ENCODE measurements at regions of chr3 and their contacts with region 1.

Region 1: DNA sequence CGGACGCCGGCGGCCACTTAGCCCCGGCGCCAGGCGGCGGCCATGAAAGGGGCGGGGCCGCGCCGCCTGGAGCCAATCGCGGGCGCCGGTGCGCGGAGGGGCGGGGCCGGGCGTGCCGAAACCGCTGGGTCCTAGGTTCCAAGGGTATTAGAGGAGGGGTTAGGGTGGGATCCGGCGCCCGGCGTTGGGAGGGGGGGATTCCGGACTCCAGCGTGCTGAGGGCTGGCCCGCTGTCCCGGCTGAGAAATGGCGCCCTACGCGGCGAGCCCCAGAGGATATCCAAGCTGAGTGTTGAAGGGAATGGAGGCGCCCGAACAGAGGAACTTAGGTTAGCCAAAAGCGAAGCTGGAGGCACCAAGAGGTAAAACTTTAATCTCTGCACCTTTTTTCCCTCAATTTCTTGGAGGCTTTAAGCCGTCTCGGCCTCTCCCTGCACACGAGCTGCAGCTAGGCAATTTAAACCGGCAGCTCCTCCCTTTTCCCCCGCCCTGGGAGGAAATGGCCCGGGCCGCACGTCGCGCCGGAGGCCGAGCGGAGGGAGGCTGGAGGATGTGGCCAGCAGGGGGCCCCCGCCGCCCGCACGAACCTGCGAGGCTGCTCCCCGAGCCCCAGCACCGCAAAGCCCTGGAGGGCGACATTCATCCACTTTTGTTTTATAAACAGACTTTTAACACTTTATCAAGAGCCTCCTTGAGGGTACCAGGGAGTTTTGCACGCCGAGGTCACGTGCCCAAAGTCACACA is at the start of gene XXYLT1:
- DNase-seq: no peak
- H3K4me3 ChIP-seq: peak within 1 kb of the TSS; percentile 81
- H3K27ac ChIP-seq: peak within 1 kb of the TSS; percentile 39
- H3K27me3 ChIP-seq: no peaks in the 10 kb centered on the region
- CTCF ChIP-seq: peak; percentile 86
- polyA plus RNA-seq, gene XXYLT1: 16.5 and 17.3 TPM in 2 replicates

Region 2: DNA sequence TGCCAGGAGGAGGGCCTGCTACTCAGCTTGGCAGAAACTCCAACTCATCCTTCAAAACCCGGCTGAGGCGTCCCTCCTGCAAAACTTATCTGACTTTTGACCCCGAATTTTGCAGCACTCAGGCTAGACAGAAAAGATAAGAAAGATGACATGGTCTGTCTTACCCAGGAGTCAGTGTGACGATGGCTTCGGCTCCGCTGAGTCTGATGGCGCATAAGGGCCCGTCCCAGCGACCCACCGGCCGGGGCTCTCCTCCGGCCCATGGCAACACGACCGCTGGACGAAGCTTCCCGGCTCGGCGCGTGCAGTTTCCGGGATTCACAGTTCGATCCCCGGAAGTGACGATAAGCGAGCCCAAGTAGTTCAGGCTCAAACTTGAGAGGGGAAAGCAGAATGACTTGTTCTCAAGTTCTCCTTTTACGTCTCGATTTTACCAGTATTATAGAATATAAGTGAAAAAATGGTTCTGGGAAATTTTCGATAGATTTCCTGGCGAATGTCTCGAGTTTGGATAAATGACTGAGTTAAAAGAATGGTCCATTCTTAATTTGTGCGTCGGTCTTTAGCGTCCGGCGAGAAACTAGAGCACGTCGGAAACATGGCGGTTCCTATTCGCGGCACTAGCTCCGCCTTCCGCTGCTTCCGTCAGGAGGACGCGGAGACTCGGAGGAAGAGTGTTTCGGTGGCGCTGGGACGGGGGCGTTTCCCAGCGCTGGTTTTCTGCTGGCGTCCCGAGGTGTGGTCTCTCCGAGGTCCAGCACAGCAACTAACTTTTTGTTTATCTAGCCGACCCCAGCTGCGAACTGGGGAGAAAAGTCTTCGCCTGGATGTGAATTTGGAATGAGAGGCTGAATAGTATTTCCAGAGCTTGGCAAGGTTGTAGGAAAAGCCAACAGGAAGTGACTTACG is 599.1 kb before region 1 on chr3 and contains the start of gene LSG1:
- CTCF ChIA-PET with region 1: interaction called, 37 read pairs
- POLR2A ChIA-PET with region 1: interaction called, 4 read pairs
- DNase-seq: peak; percentile 87
- H3K4me3 ChIP-seq: peak within 1 kb of the TSS; percentile 95
- H3K27ac ChIP-seq: peak within 1 kb of the TSS; percentile 84
- H3K27me3 ChIP-seq: peaks cover 3% of the 10 kb centered on the region
- CTCF ChIP-seq: no peak
- polyA plus RNA-seq, gene LSG1: 30.2 and 34.0 TPM in 2 replicates

Region 3: GRCh38 chr3:195297446-195297845 is 26.2 kb after region 1 on chr3:
- CTCF ChIA-PET with region 1: interaction called, 18 read pairs
- POLR2A ChIA-PET with region 1: no interaction called
- DNase-seq: no peak
- H3K4me3 ChIP-seq: no peak overlapping the region
- H3K27ac ChIP-seq: no peak overlapping the region
- H3K27me3 ChIP-seq: no peaks in the 10 kb centered on the region
- CTCF ChIP-seq: no peak

Region 4: DNA sequence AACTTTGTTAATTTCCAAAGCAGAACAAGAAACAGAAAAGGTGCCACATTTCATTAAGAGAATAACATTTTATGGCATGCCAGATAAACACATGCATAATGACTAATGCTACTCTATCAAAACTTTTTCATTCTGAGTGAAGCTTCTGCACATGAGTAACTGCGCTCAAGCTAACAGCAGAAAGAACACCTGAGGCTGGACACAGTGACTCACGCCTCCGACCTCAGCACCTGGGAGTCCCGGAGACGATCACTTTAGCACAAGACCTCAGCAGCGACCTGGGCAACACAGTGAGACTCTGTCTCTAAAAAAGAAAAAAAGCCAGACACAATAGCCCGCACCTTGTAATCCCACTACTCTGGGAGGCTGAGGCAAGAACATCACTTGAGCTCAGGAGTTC is 100.9 kb after region 1 on chr3:
- CTCF ChIA-PET with region 1: no interaction called
- POLR2A ChIA-PET with region 1: no interaction called
- DNase-seq: no peak
- H3K4me3 ChIP-seq: no peak overlapping the region
- H3K27ac ChIP-seq: no peak overlapping the region
- H3K27me3 ChIP-seq: no peaks in the 10 kb centered on the region
- CTCF ChIP-seq: no peak

Region 5: DNA sequence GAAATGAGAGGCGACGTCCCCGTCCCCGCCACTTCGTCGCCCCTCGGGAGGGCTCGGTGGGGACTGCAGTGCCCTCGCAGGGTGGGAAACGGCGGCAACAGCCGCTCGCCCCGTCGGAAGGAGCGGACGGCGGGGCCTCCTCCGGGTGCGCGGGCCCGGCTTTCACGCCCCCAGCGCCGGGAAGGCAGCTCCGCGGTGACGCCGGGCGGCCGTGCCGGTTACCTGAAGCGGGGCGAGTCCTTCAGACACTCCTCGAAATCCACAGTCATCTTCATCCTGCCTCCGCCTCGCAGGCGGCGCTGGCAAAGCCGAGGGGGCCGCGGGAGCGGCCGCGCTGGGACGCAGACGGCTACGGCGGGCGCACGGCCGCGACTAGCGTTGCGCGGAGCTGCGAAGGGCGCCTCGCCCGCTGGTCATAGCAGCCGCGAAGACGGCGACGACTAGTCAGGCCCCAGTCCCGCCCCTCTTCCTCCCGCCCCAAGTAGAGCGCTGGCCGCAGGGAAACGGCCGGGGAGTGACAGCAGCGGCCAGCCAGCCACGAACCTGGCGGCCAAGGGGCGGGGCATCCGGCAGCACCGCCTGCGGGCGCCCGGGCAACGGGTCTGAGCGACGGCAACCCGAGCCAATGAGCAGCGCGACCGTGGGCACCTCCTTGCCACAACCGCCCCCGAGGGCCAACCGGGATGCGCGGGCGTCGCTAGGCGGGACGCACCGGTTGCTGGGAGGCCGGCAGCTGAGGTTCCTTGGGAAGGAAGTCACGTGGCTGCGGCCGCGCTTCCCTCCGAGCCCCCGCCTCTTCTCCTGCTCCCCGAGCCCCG is 171.5 kb after region 1 on chr3 and contains the start of gene ACAP2:
- CTCF ChIA-PET with region 1: interaction called, 16 read pairs
- POLR2A ChIA-PET with region 1: interaction called, 9 read pairs
- DNase-seq: peak; percentile 99
- H3K4me3 ChIP-seq: peak within 1 kb of the TSS; percentile 60
- H3K27ac ChIP-seq: peak within 1 kb of the TSS; percentile 25
- H3K27me3 ChIP-seq: no peaks in the 10 kb centered on the region
- CTCF ChIP-seq: no peak
- polyA plus RNA-seq, gene ACAP2: 35.9 and 50.2 TPM in 2 replicates

Region 6: GRCh38 chr3:195517030-195517429 is 245.7 kb after region 1 on chr3:
- CTCF ChIA-PET with region 1: interaction called, 303 read pairs
- POLR2A ChIA-PET with region 1: no interaction called
- DNase-seq: no peak
- H3K4me3 ChIP-seq: no peak overlapping the region
- H3K27ac ChIP-seq: no peak overlapping the region
- H3K27me3 ChIP-seq: no peaks in the 10 kb centered on the region
- CTCF ChIP-seq: no peak

Region 7: DNA sequence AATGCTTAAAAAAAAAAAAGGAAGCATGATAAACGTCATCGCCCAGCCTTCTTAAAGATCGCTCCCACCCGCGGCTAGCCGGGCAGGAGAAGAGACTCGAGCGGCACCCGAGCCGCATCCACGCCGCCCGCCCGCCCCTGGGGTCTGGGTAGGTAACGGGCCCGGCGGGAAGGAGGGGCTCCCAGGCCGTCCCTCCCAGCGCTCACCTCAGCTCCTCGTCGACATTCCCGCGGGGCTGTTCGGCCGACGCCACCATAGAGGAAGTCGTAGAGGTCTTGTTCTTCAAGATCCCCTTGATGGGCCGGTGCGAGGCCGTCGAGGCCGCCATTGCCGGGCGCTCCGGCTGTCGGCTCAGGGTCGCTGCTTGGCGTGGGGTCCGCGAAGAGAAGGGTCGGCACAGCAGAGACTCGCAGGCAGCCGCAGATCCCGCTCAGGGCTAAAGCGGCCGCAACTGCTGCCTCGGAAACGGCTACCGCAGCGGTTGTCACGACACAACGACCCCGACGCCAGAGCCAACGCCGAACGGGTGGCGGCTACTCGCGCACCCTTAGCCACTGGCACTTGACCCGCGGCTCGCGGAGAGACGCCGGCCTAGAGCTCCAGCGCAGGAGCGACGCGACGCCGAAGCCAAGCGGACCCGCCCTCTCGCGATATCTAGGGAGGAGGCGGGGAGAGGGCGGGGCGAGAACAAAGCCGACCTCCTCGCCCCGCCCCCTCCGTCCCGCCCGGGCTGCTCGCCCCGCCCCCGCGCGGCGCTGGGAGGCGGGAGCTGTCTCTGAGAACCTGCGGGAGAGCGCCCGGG is 271.6 kb after region 1 on chr3 and contains the start of gene PPP1R2:
- CTCF ChIA-PET with region 1: interaction called, 16 read pairs
- POLR2A ChIA-PET with region 1: interaction called, 15 read pairs
- DNase-seq: peak; percentile 78
- H3K4me3 ChIP-seq: peak within 1 kb of the TSS; percentile 91
- H3K27ac ChIP-seq: peak within 1 kb of the TSS; percentile 65
- H3K27me3 ChIP-seq: peaks cover 2% of the 10 kb centered on the region
- CTCF ChIP-seq: no peak
- polyA plus RNA-seq, gene PPP1R2: 84.3 and 92.0 TPM in 2 replicates

Measured in AG04450 (cell line).